Activated CD4-positive, alpha-beta T cell treated with anti-CD3 and anti-CD28 coated beads, Interleukin-2, amount 10 ng/mL, durations not matched to agents 24 days and 14 days (primary cell): ENCODE measurements at regions of chr1 and their contacts with region 1.

Region 1: GRCh38 chr1:89632657-89633247 is at the start of gene LRRC8C:
- DNase-seq: peak; percentile 97
- H3K4me3 Mint-ChIP-seq: peak within 1 kb of the TSS; percentile 96
- H3K27ac Mint-ChIP-seq: peak within 1 kb of the TSS; percentile 95
- H3K4me1 Mint-ChIP-seq: peaks cover 61% of the 10 kb centered on the region
- H3K27me3 Mint-ChIP-seq: no peaks in the 10 kb centered on the region
- total RNA-seq, gene LRRC8C: 73.1 and 74.0 TPM in 2 replicates

Region 2: DNA sequence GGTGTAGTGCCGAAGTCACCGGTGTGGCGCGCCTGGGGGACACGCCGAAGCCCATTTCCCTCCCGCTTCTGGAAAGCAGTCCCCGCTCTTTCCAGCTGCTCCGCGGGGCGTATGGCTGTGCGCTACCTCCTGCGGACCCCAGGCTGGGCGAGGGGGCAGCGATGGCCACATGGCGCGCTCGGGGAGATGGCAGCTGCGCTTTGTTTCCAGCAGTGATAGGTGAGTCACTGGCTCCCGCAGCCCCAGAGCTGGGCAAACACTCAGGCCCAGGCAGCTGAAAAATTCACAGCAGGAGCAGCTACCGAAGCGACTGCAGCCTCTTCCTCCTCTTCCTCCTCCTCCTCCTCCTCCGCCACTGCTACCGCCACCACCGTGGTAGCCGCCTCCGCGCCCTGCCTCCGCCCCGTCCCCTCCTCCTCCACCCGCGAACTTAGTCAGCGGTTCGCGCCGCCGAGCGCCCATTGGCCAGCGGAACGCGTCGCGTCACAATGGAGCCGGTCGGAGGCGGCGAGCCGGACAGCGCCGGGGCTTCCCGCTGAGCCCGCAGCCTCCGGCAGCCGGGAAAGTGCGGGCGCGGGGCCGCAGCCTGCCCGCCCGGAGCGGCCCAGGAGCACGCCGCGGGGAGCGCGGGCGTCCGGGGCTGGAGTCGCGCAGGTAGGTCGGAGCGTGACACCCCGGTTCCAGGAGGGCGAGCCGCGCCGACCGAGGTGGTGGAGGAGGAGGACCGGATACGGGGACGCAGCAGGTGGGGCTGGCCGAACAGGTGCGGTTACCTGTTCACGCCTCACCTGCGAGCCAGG is 108.2 kb before region 1 on chr1 and contains the start of gene LRRC8B:
- intact Hi-C with region 1: loop called (anchors 1 kb)
- DNase-seq: peak; percentile 98
- H3K4me3 Mint-ChIP-seq: no peak within 1 kb of the TSS
- H3K27ac Mint-ChIP-seq: peak within 1 kb of the TSS; percentile 95
- H3K4me1 Mint-ChIP-seq: peaks cover 34% of the 10 kb centered on the region
- H3K27me3 Mint-ChIP-seq: no peaks in the 10 kb centered on the region
- total RNA-seq, gene LRRC8B: 74.5 and 76.8 TPM in 2 replicates

Region 3: DNA sequence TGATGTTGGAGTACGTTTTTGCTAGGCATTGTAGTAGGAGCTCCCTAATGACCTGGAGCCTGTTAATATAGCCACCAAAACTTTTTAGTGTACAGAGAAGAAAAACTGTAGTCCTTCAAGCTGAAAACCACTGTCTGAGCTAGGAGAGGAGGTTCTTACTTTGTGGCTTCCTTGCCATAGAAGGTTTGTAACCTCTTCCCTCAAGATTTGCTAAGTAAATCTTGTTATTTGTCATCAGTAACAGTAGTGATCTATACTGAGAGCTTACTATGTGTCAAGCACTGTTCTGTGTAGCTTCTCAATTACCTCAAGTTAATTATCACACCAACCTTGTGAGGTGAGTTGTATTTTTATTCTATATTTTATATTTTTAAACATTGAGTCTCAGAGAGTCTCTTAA is 21.0 kb before region 1 on chr1:
- intact Hi-C with region 1: loop called (anchors 1 kb)
- DNase-seq: peak; percentile 82
- H3K4me3 Mint-ChIP-seq: peak overlapping the region; percentile 88
- H3K27ac Mint-ChIP-seq: peak overlapping the region; percentile 99
- H3K4me1 Mint-ChIP-seq: peaks cover 68% of the 10 kb centered on the region
- H3K27me3 Mint-ChIP-seq: no peaks in the 10 kb centered on the region

Region 4: GRCh38 chr1:89670163-89670562 is 37.4 kb after region 1 on chr1:
- intact Hi-C with region 1: loop called (anchors 5 kb)
- DNase-seq: peak; percentile 70
- H3K4me3 Mint-ChIP-seq: peak overlapping the region; percentile 30
- H3K27ac Mint-ChIP-seq: peak overlapping the region; percentile 74
- H3K4me1 Mint-ChIP-seq: peaks cover 73% of the 10 kb centered on the region
- H3K27me3 Mint-ChIP-seq: no peaks in the 10 kb centered on the region

Region 5: DNA sequence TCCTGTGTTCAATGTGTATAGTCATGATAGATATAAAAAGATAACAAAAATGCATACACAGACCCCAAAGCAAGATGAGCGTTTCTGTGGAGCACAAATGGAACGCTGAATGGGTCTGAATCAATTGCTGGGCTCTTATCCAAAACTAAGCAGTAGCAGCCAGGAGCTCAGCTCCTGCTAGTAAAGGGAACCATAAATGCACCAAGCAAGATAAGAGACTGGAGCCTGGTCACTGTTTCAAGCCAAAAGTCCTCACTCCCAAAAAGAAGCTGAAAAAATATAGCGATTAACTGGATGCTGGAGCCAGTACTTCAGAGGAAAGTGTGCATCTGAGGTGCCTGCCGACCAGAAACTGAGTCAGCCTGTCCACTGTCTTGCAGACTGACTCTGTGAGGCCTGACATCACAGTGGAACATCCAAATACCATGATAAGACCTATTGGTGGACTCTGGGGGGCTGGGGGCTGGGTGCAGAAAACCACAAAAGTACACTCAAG is 69.0 kb after region 1 on chr1:
- intact Hi-C with region 1: loop called (anchors 2 kb)
- DNase-seq: no peak
- H3K4me3 Mint-ChIP-seq: no peak overlapping the region
- H3K27ac Mint-ChIP-seq: peak overlapping the region; percentile 71
- H3K4me1 Mint-ChIP-seq: peaks cover 62% of the 10 kb centered on the region
- H3K27me3 Mint-ChIP-seq: no peaks in the 10 kb centered on the region

Region 6: GRCh38 chr1:89987170-89987819 is 354.5 kb after region 1 on chr1:
- intact Hi-C with region 1: loop called (anchors 2 kb)
- DNase-seq: peak; percentile 90
- H3K4me3 Mint-ChIP-seq: no peak overlapping the region
- H3K27ac Mint-ChIP-seq: no peak overlapping the region
- H3K4me1 Mint-ChIP-seq: peaks cover 12% of the 10 kb centered on the region
- H3K27me3 Mint-ChIP-seq: peaks cover 11% of the 10 kb centered on the region